ENCODE measurements at regions of chr1 and their contacts with region 1.

Region 1: DNA sequence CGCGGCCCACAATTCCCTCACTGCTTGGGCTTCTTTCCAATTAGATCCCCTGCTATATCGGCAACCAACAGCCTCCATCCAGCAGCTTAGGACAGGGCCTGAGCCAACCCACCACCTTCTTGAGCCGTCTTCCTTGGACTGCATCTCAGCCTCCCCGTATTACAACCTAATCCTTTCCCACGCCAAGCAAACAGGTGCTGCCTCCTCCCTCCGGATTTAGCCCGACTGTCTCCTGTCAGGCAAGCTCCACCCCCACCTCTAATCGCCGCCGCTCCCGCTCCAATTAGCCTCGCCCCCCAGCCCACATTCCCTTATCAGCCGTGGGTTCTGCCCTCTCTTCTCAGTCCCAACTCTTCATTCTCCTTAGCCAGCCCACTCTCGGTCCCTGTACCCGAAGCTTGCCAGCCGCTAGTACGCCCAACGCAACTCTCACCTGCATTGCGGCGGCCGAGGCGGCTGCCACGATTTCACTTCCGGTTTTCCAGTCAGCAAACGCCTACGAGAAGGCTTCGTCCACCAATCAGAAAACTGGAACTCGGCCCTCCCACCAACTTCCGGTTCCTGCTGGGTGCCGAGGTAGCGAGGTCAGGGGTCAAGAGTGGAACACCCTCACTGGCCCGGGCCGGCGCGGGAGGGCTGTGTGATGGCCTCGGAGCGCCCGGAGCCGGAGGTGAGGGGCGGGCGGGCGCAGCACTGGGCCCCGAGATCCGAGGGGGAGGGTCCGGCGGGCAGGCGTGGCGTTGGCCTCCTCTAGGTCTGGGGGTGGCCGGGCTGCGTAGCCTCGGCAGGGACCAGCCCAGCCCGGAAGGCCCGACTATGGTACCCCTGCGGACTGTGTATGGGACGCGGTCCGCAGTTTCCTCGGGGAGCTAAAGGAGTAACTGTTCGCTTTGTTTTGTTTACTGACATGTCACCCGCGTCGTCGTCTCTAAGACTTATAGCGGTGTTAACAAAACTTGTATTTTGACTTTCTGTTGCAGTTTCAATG is at the starts of genes MED8 and SZT2:
- DNase-seq: peak; percentile 99
- H3K4me3 Mint-ChIP-seq: peak within 1 kb of the TSS; percentile 99
- H3K27ac Mint-ChIP-seq: peak within 1 kb of the TSS; percentile 95
- H3K4me1 Mint-ChIP-seq: peaks cover 40% of the 10 kb centered on the region
- H3K27me3 Mint-ChIP-seq: no peaks in the 10 kb centered on the region
- total RNA-seq, gene MED8: 39.6 and 45.1 TPM in 2 replicates
- total RNA-seq, gene SZT2: 54.0 and 56.2 TPM in 2 replicates

Region 2: DNA sequence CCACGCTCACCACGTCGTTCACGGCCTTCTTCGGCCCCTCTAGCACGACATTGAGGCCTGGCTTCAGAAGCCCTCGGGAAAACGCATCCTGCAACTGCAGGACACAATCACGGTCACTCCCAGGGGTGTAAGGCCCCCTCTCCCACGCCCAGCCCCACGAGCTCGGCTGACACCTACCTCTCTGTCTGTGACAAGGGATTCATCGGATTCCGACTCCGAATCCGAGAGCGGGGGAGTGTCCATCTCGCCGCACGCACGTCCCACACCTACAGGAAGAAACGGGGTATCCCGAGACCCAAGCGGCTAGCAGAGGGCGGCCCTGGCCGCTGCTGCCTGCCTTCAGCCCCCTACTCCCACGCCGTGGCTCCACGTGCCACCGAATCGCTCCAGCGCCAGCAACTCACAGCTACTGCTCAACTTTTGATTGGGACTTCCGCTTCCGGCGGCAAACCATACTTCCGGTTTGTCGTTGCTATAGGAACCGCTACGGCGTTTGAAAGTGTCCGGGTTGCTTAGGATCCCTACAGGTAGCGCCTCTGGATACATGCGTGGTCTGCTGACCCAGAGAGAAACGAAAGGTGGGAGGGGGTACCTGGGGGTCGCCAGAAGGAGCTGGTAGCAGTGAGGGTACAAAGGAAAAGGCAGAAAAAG is 217.6 kb before region 1 on chr1 and contains the starts of genes CFAP57 and EBNA1BP2:
- intact Hi-C with region 1: loop called (anchors 1 kb)
- DNase-seq: peak; percentile 98
- H3K4me3 Mint-ChIP-seq: peak within 1 kb of the TSS; percentile 97
- H3K27ac Mint-ChIP-seq: peak within 1 kb of the TSS; percentile 97
- H3K4me1 Mint-ChIP-seq: peaks cover 26% of the 10 kb centered on the region
- H3K27me3 Mint-ChIP-seq: peaks cover 22% of the 10 kb centered on the region
- total RNA-seq, gene CFAP57: 0.40 TPM in 1 of 2 replicates, not detected in the other
- total RNA-seq, gene EBNA1BP2: 134 and 135 TPM in 2 replicates

Measured in activated CD4-positive, alpha-beta T cell treated with anti-CD3 and anti-CD28 coated beads, Interleukin-2, amount 10 ng/mL, durations not matched to agents 24 days and 14 days (primary cell).